Dendritic cell treated with granulocyte-macrophage colony-stimulating factor and Interleukin-4, amounts not matched to agents 40 ng/mL and 50 ng/mL, for 4 days (primary cell): ENCODE measurements at regions of chr19 and their contacts with region 1.

Region 1: GRCh38 chr19:57435062-57435978 is at the start of gene ZNF749:
- H3K4me3 Mint-ChIP-seq: peak within 1 kb of the TSS; percentile 83
- H3K27ac Mint-ChIP-seq: peak within 1 kb of the TSS; percentile 76
- H3K4me1 Mint-ChIP-seq: peaks cover 21% of the 10 kb centered on the region
- H3K27me3 Mint-ChIP-seq: no peaks in the 10 kb centered on the region

Region 2: DNA sequence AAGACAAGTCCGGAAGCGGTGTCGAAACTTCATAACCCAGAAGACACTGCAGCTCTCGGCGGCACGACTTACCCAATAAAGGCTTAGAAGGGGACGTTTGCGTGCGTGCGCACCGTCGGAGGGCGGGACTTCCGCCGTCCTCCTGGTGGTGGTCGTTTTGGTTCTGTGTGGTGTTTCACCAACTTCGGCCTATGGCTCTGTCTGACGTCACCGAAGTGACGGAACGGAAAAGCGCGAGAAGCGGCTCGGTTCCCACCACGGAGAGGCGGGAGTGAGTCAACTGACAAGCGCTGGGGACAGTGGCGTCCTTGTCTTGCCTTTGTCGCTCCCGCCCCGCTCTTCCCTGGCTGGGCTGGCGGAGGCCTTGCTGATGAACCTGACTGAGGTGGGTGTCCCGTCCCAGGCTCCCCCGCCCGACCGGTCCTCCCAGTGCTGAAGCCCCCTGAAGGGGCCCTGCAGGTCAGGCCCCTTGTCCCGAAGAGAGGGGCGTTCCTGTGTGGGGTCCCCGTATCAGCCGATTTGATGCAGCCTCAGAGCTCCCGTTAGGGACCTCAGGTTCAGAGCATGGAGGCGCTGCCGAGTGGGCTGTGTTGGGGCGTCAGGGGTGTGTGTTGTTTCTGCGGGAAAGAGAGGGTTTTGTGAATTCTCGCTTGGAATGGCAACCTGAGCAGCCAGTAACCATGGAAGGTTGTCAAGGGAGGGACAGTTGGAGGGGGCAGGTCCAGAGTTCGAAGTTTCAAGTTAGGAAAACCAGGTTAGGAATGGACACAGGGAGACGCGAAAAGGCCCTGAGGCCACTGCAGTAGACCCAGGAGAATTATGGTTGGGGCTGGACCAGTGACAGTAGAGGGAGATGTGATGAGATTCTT is 45.4 kb before region 1 on chr19 and contains the start of gene ZNF548:
- intact Hi-C with region 1: loop called (anchors 1 kb)
- H3K4me3 Mint-ChIP-seq: peak within 1 kb of the TSS; percentile 86
- H3K27ac Mint-ChIP-seq: peak within 1 kb of the TSS; percentile 89
- H3K4me1 Mint-ChIP-seq: peaks cover 18% of the 10 kb centered on the region
- H3K27me3 Mint-ChIP-seq: peaks cover 4% of the 10 kb centered on the region

Region 3: DNA sequence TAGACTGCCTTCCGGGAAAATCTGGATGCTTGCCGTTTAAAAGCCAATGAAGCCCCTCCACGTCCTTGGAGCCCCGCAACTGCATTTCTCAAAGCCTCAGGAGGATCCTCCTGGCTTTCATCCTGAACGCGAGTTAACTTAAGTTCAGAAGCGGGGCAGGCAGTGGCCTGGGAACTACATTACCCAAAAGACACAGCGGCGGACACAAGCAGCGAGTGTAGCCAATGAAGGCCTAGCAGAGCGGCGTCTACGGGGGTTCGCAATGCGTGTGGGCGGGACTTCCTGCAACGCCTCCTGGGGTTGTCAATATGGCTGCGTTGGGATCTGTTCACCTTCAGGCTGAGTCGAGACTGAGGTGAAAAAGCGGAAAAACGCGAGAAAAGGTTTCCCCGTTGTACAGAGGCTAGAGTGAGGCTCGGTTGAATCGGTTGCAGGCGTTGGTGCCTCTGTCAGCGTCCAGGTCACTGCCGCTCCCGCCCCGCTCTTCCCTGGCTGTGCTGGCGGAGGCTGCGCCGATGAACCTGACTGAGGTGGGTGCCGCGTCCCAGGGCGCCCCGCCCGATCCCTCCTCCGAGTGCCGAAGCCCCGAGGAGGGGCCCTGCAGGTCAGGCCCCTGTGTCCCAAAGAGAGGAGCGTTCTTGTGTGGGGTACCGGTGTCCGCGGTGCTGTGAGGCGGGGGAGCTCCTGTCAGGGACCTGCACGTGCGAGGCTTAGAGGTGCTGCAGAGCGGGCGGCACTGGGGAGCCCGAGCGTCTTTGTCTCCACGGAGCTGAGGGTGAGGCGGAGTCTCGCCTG is 24.2 kb before region 1 on chr19 and contains the start of gene ZNF17:
- intact Hi-C with region 1: loop called (anchors 1 kb)
- H3K4me3 Mint-ChIP-seq: peak within 1 kb of the TSS; percentile 95
- H3K27ac Mint-ChIP-seq: peak within 1 kb of the TSS; percentile 87
- H3K4me1 Mint-ChIP-seq: peaks cover 11% of the 10 kb centered on the region
- H3K27me3 Mint-ChIP-seq: no peaks in the 10 kb centered on the region

Region 4: GRCh38 chr19:57477191-57478008 is 42.1 kb after region 1 on chr19 and contains the start of gene ZNF772:
- intact Hi-C with region 1: loop called (anchors 5 kb)
- H3K4me3 Mint-ChIP-seq: peak within 1 kb of the TSS; percentile 87
- H3K27ac Mint-ChIP-seq: peak within 1 kb of the TSS; percentile 93
- H3K4me1 Mint-ChIP-seq: peaks cover 21% of the 10 kb centered on the region
- H3K27me3 Mint-ChIP-seq: peaks cover 7% of the 10 kb centered on the region